Common myeloid progenitor, CD34-positive (primary cell): ENCODE measurements at regions of chr1 and their contacts with region 1.

Region 1: GRCh38 chr1:209190591-209191261 is 392.8 kb upstream of the CAMK1G start:
- DNase-seq: peak; percentile 39 to 74 (median 68)
- H3K4me3 ChIP-seq: no peak overlapping the region
- H3K27ac ChIP-seq: no peak overlapping the region
- H3K4me1 ChIP-seq: no peaks in the 10 kb centered on the region
- H3K27me3 ChIP-seq: peaks cover 0 to 3% (median 0%) of the 10 kb centered on the region in 5 experiments

Region 2: DNA sequence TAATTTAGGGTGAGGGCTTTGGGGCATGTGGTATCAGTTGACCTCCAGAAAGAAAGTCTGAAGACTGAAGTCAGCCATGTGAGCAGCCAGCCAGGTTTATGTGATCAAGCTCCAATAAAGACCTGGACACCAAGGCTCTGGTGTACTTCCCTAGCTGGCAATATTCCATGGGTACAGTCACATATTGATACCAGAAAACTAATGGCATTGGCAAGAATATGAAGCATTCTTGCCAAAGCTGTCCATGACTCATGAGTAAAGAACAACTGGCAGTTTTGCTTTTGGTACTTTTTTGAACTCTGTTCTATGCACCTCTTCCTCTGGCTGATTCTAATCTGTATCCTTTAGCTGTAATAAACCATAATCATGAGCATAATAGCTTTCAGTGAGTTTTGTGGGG is 22.5 kb before region 1 on chr1:
- CTCF ChIA-PET with region 1: no interaction called
- POLR2A ChIA-PET with region 1: no interaction called
- DNase-seq: no peak
- H3K4me3 ChIP-seq: no peak overlapping the region
- H3K27ac ChIP-seq: no peak overlapping the region
- H3K4me1 ChIP-seq: no peaks in the 10 kb centered on the region
- H3K27me3 ChIP-seq: peaks cover 0 to 2% (median 0%) of the 10 kb centered on the region in 5 experiments

Region 3: GRCh38 chr1:209207701-209208286 is 17.1 kb after region 1 on chr1:
- CTCF ChIA-PET with region 1: interaction called, 22 read pairs
- POLR2A ChIA-PET with region 1: no interaction called
- DNase-seq: peak; percentile 70 to 86 (median 82)
- H3K4me3 ChIP-seq: peak overlapping the region in 4 of 7 experiments; percentile 34 to 74 (median 62)
- H3K27ac ChIP-seq: no peak overlapping the region
- H3K4me1 ChIP-seq: peaks cover 0 to 14% (median 8%) of the 10 kb centered on the region in 4 experiments
- H3K27me3 ChIP-seq: peaks cover 3 to 23% (median 17%) of the 10 kb centered on the region in 5 experiments